ENCODE measurements at regions of chr10 and their contacts with region 1.

Region 1: GRCh38 chr10:14507176-14507575 is 176.5 kb upstream of the FRMD4A start:
- DNase-seq: peak in 8 of 9 donors; percentile 21 to 89 (median 82)
- ATAC-seq: peak; percentile 96
- H3K4me3 ChIP-seq: no peak overlapping the region
- H3K4me3 Mint-ChIP-seq: peak overlapping the region; percentile 5 to 80 (median 62)
- H3K27ac ChIP-seq: peak overlapping the region; percentile 72
- H3K27ac Mint-ChIP-seq: peak overlapping the region; percentile 68 to 100 (median 92)
- H3K4me1 ChIP-seq: peaks cover 21 to 25% of the 10 kb centered on the region in 2 donors
- H3K4me1 Mint-ChIP-seq: peaks cover 17 to 41% (median 32%) of the 10 kb centered on the region in 7 donors
- H3K27me3 ChIP-seq: no peaks in the 10 kb centered on the region
- H3K27me3 Mint-ChIP-seq: no peaks in the 10 kb centered on the region

Region 2: GRCh38 chr10:14528450-14528849 is 21.3 kb after region 1 on chr10:
- CTCF ChIA-PET with region 1: no interaction called
- POLR2A ChIA-PET with region 1: interaction called, 3 read pairs
- intact Hi-C with region 1: loop called in 1 of 2 experiments (anchors 2 kb)
- DNase-seq: peak in 7 of 9 donors; percentile 18 to 52 (median 39)
- ATAC-seq: peak; percentile 85
- H3K4me3 ChIP-seq: no peak overlapping the region
- H3K4me3 Mint-ChIP-seq: peak overlapping the region in 9 of 10 donors; percentile 55 to 79 (median 65)
- H3K27ac ChIP-seq: no peak overlapping the region
- H3K27ac Mint-ChIP-seq: peak overlapping the region; percentile 15 to 79 (median 58)
- H3K4me1 ChIP-seq: peaks cover 33 to 38% of the 10 kb centered on the region in 2 donors
- H3K4me1 Mint-ChIP-seq: peaks cover 59 to 91% (median 82%) of the 10 kb centered on the region in 7 donors
- H3K27me3 ChIP-seq: no peaks in the 10 kb centered on the region
- H3K27me3 Mint-ChIP-seq: no peaks in the 10 kb centered on the region

Region 3: DNA sequence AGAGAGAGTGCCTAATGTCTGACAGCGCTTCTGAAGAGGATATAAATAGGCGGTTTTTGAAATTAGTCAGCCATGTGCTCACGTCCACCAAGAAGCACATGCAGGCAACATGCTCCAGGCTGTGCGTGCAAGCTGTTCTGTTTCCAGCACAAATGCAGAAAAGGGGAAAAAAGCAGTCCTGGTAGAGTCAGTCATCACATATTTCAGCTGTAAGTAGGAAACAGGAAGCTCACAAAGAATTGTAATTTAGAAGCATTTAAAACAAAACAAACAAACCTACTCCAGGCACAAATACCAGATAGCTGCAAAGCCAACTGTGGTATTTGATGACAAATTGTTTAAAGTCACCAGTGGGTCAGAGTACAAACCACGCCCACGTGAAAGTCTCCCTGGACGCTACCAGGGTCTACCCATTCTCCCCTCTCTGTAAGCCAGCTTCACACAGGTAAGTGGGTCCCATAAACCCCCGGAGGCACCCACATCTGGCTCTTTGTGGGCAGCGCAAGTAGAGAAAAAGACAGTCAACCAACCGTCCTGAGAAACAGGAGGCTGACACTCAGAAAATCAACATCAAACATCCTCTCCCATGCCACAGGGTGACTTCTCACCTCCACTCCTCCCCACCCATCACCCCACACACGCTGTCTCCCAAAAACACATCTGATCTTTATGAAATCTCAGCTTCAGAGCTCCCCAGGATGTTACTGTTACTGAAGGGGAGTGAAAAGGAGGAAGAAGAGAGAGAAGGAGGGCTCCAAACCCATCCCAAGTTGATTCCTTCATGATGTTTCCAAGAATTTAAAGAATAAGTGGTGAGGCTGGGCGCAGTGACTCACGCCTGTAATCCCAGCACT is 81.1 kb after region 1 on chr10:
- CTCF ChIA-PET with region 1: no interaction called
- POLR2A ChIA-PET with region 1: no interaction called
- intact Hi-C with region 1: loop called in 1 of 2 experiments (anchors 5 kb)
- DNase-seq: peak in 6 of 9 donors; percentile 24 to 60 (median 44)
- ATAC-seq: peak; percentile 20
- H3K4me3 ChIP-seq: peak overlapping the region; percentile 31
- H3K4me3 Mint-ChIP-seq: peak overlapping the region; percentile 76 to 88 (median 84)
- H3K27ac ChIP-seq: peak overlapping the region; percentile 83
- H3K27ac Mint-ChIP-seq: peak overlapping the region; percentile 96 to 100 (median 99)
- H3K4me1 ChIP-seq: peaks cover 73 to 76% of the 10 kb centered on the region in 2 donors
- H3K4me1 Mint-ChIP-seq: peaks cover 52 to 94% (median 93%) of the 10 kb centered on the region in 7 donors
- H3K27me3 ChIP-seq: no peaks in the 10 kb centered on the region
- H3K27me3 Mint-ChIP-seq: no peaks in the 10 kb centered on the region

Region 4: DNA sequence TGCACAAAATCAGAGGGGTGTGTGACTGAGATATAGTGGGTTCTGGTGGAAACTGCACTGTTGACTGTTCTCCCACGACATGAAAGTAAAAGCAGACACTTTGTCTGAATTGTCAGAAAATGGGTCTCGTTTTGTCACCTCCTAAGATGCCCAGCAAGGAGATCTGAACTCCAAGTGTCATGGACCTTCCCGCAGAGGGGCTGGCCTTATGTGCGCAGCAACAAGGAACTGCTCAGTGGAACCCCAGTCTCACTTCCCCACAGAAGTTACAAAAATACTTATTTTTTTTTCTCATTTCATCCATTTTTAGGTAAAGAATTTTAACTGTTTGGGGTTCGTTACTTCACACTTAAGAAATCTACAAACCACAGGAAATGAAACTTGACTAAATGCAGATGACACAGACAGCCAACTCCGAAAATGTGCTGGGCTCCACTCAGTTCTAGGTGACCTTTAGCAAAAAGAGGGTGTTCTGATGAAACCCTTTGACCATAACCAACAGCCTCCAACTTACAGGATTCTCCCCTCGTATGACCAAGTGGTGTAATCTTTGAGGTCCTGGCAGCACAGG is 152.5 kb after region 1 on chr10:
- CTCF ChIA-PET with region 1: no interaction called
- POLR2A ChIA-PET with region 1: no interaction called
- intact Hi-C with region 1: no loop called
- DNase-seq: peak in 5 of 9 donors; percentile 14 to 75 (median 55)
- ATAC-seq: peak; percentile 87
- H3K4me3 ChIP-seq: peak overlapping the region; percentile 7
- H3K4me3 Mint-ChIP-seq: peak overlapping the region; percentile 52 to 79 (median 74)
- H3K27ac ChIP-seq: peak overlapping the region; percentile 62
- H3K27ac Mint-ChIP-seq: peak overlapping the region; percentile 74 to 97 (median 86)
- H3K4me1 ChIP-seq: peaks cover 24 to 34% of the 10 kb centered on the region in 2 donors
- H3K4me1 Mint-ChIP-seq: peaks cover 42 to 81% (median 57%) of the 10 kb centered on the region in 7 donors
- H3K27me3 ChIP-seq: no peaks in the 10 kb centered on the region
- H3K27me3 Mint-ChIP-seq: peaks cover 0 to 2% (median 0%) of the 10 kb centered on the region in 5 donors

Measured in naive thymus-derived CD4-positive, alpha-beta T cell (primary cell).